Activated CD4-positive, alpha-beta memory T cell treated with anti-CD3 and anti-CD28 coated beads for 36 hours (primary cell): ENCODE measurements at regions of chr1 and their contacts with region 1.

Region 1: GRCh38 chr1:162847839-162848453 is 13.0 kb downstream of the CCDC190 start:
- DNase-seq: peak; percentile 80
- H3K4me3 Mint-ChIP-seq: no peak overlapping the region
- H3K27ac Mint-ChIP-seq: no peak overlapping the region
- H3K4me1 Mint-ChIP-seq: no peaks in the 10 kb centered on the region
- H3K27me3 Mint-ChIP-seq: peaks cover 1% of the 10 kb centered on the region

Region 2: GRCh38 chr1:162861101-162861500 is 13.2 kb after region 1 on chr1 and contains the start of gene CCDC190:
- CTCF ChIA-PET with region 1: interaction called, 23 read pairs
- POLR2A ChIA-PET with region 1: no interaction called
- intact Hi-C with region 1: no loop called
- DNase-seq: no peak
- H3K4me3 Mint-ChIP-seq: no peak within 1 kb of the TSS
- H3K27ac Mint-ChIP-seq: no peak within 1 kb of the TSS
- H3K4me1 Mint-ChIP-seq: no peaks in the 10 kb centered on the region
- H3K27me3 Mint-ChIP-seq: peaks cover 16% of the 10 kb centered on the region
- total RNA-seq, gene CCDC190: not detected